ENCODE measurements at regions of chr5 and their contacts with region 1.

Region 1: GRCh38 chr5:16489322-16489791 is 23.8 kb upstream of the ZNF622 start:
- DNase-seq: no peak
- ATAC-seq: peak; percentile 81 to 88

Region 2: GRCh38 chr5:16536246-16536645 is 46.9 kb after region 1 on chr5:
- intact Hi-C with region 1: no loop called
- DNase-seq: no peak
- ATAC-seq: peak in 1 of 2 donors; percentile 12

Region 3: GRCh38 chr5:16552666-16553343 is 63.4 kb after region 1 on chr5:
- intact Hi-C with region 1: loop called (anchors 2 to 10 kb)
- DNase-seq: peak; percentile 78
- ATAC-seq: peak; percentile 86 to 91

Region 4: DNA sequence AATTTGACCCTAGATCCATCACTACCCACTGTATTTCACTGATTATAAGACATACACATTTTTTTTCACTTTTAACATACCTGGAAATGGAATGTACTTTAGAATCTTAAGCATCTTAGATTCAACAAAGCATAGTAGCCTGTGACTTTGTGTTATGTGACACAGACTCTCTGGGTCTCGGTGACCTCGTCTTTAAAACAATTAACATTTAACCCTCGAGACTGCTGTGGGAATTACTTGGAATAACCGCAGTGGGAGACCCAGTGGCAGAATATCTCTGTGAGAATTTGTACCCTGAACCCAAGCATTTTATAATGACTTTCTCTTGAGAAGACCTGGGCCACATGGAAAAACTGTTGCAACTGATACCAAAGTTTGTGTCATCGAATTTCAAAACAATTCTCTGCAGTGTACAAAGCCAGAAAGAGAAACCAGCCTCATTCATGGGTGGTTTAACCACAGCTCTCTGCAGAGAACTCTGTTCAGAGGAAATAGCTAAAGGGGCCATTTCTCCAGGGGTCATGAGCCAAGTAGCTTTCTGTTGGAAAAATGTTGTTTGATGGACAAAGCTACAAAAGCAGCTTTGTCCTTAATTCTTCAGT is 137.4 kb after region 1 on chr5:
- intact Hi-C with region 1: loop called in 1 of 2 experiments (anchors 5 kb)
- DNase-seq: no peak
- ATAC-seq: peak in 1 of 2 donors; percentile 22

Region 5: DNA sequence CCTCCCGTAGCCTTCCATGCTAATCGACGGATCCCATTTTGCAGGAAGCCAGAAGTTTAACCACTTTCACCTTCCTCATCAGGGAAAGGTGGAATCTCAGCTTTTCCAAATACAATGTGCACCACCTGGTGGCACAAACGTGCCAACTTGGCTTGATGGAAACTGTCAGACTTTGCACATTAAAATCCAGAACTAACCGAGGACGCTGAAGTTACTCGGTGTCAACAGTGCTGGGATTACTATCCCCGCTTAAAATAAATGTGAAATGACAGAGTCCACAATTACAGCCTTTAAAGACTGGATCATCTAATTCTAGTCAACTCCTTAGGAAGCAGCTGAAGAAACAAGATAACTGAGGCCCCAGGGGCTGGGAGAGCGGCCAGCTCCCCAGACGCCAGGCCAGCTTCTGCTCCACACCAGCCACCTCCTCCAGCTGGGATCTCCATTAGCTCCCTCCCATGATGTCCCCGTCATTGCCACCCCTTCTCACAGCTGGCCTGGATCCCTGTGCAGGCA is 177.6 kb after region 1 on chr5:
- intact Hi-C with region 1: loop called in 1 of 2 experiments (anchors 2 kb)
- DNase-seq: peak; percentile 61
- ATAC-seq: peak; percentile 81 to 91

Region 6: DNA sequence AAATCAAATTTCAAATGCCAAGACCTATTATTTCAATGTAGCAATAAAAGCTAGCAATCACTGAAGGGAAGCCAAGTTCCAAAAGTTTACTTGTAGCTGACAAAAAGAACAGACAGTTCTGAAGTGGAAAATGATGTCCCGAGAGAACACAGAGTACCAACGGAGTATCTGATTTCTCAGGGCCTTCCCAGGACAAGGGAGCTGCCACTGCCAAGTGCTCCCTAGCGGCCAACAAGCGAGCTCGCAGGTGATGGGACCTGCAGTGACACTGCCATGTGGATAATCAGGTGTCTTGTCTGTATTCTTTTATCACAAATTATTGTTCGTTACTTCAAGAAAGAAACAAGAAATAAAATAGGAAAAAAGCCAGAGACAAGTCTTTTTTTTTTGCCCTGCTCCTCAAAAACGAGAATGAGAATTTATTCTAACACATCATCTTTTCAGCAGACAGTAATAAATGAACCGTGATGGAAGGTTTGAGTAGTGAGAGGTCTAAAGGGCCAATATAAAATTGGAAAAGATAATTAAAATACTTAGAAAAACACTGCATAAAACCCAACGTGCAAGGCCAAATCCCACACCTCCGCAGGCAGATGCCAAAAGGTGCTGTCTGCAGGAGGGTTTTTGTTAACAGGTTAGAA is 287.4 kb after region 1 on chr5:
- intact Hi-C with region 1: loop called in 1 of 2 experiments (anchors 5 kb)
- DNase-seq: peak; percentile 37
- ATAC-seq: peak; percentile 82 to 84

Region 7: GRCh38 chr5:17189381-17190036 is 700.2 kb after region 1 on chr5:
- intact Hi-C with region 1: loop called in 1 of 2 experiments (anchors 10 kb)
- DNase-seq: peak; percentile 83
- ATAC-seq: peak; percentile 56 to 71